ENCODE measurements at regions of chr7 and their contacts with region 1.

Region 1: DNA sequence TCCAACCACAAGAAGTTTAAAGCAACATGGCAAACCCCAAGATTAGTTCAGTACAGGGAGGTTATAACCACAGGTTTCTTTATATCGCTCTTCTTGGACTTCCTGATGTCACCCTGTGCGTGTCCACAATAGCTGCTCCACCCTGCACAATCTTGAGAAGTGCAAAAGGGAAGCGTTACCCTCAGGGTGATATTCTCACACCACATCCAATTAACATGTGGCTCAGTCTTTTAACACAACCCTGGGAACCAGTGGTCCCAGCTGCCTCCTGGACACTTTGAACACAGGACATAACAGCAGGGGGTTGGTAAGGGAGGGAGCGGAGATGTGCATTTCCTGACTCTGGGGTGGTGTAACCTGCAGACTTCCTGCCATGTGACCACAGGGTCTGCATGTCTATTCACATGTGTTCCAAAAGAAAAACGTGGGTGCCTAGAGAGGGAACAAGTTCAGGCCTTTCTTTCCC is 64.6 kb downstream of the GSAP start:
- DNase-seq: peak in 4 of 5 donors; percentile 32 to 57 (median 42)
- ATAC-seq: peak; percentile 38 to 88 (median 70)
- H3K4me3 ChIP-seq: no peak overlapping the region
- H3K27ac ChIP-seq: peak overlapping the region in 10 of 12 donors; percentile 7 to 70 (median 50)
- H3K4me1 ChIP-seq: peaks cover 0 to 63% (median 23%) of the 10 kb centered on the region in 12 donors
- H3K27me3 ChIP-seq: no peaks in the 10 kb centered on the region
- CTCF ChIP-seq: no peak
- POLR2A ChIP-seq: no peak

Region 2: DNA sequence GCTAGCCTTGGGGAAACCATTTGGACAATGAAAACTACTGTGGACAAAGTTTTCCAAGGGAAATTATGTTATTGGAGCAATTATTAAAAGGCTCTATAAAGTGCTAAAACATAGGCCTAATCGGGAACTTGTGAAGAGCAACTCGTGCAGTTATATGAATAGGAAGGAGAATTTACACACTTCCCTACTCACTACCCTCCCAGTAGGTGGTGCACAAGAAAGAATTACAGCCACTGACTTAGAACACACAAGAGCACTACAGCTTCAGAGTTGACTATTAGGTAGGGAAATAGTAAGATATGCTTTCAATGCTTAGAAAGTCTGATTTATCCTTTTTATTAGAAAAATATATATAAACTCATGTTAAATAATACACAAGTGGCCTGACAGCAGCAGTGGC is 17.4 kb after region 1 on chr7:
- intact Hi-C with region 1: no loop called
- DNase-seq: no peak
- ATAC-seq: no peak
- H3K4me3 ChIP-seq: no peak overlapping the region
- H3K27ac ChIP-seq: no peak overlapping the region
- H3K4me1 ChIP-seq: no peaks in the 10 kb centered on the region
- H3K27me3 ChIP-seq: no peaks in the 10 kb centered on the region
- CTCF ChIP-seq: peak in 3 of 12 donors; percentile 6 to 14 (median 11)
- POLR2A ChIP-seq: no peak

Region 3: GRCh38 chr7:77415823-77416622 is 64.5 kb after region 1 on chr7 and contains the start of gene GSAP:
- intact Hi-C with region 1: loop called in 1 of 10 experiments (anchors 10 kb)
- DNase-seq: peak; percentile 62 to 85 (median 75)
- ATAC-seq: peak; percentile 39 to 88 (median 82)
- H3K4me3 ChIP-seq: peak within 1 kb of the TSS; percentile 77 to 97 (median 88)
- H3K27ac ChIP-seq: peak within 1 kb of the TSS; percentile 63 to 92 (median 86)
- H3K4me1 ChIP-seq: peaks cover 0 to 55% (median 8%) of the 10 kb centered on the region in 12 donors
- H3K27me3 ChIP-seq: no peaks in the 10 kb centered on the region
- CTCF ChIP-seq: peak in 6 of 12 donors; percentile 8 to 33 (median 19)
- POLR2A ChIP-seq: no peak
- total RNA-seq, gene GSAP: 4.9 to 24.9 (median 6.5) TPM

Region 4: GRCh38 chr7:77606562-77606961 is 255.0 kb after region 1 on chr7:
- intact Hi-C with region 1: no loop called
- DNase-seq: no peak
- ATAC-seq: no peak
- H3K4me3 ChIP-seq: no peak overlapping the region
- H3K27ac ChIP-seq: no peak overlapping the region
- H3K4me1 ChIP-seq: no peaks in the 10 kb centered on the region
- H3K27me3 ChIP-seq: no peaks in the 10 kb centered on the region
- CTCF ChIP-seq: no peak
- POLR2A ChIP-seq: no peak